ENCODE measurements at regions of chr4 and their contacts with region 1.

Region 1: GRCh38 chr4:183504064-183504929 is 561 bp upstream of the ING2 start:
- DNase-seq: peak; percentile 98 to 100 (median 99)
- H3K4me3 ChIP-seq: peak overlapping the region; percentile 50 to 73
- H3K4me3 Mint-ChIP-seq: peak overlapping the region; percentile 82 to 98 (median 94)
- H3K27ac ChIP-seq: peak overlapping the region; percentile 90
- H3K27ac Mint-ChIP-seq: peak overlapping the region; percentile 89 to 98 (median 95)
- H3K4me1 ChIP-seq: peaks cover 19% of the 10 kb centered on the region
- H3K4me1 Mint-ChIP-seq: peaks cover 9 to 27% (median 23%) of the 10 kb centered on the region in 4 donors
- H3K27me3 ChIP-seq: no peaks in the 10 kb centered on the region
- H3K27me3 Mint-ChIP-seq: no peaks in the 10 kb centered on the region

Region 2: DNA sequence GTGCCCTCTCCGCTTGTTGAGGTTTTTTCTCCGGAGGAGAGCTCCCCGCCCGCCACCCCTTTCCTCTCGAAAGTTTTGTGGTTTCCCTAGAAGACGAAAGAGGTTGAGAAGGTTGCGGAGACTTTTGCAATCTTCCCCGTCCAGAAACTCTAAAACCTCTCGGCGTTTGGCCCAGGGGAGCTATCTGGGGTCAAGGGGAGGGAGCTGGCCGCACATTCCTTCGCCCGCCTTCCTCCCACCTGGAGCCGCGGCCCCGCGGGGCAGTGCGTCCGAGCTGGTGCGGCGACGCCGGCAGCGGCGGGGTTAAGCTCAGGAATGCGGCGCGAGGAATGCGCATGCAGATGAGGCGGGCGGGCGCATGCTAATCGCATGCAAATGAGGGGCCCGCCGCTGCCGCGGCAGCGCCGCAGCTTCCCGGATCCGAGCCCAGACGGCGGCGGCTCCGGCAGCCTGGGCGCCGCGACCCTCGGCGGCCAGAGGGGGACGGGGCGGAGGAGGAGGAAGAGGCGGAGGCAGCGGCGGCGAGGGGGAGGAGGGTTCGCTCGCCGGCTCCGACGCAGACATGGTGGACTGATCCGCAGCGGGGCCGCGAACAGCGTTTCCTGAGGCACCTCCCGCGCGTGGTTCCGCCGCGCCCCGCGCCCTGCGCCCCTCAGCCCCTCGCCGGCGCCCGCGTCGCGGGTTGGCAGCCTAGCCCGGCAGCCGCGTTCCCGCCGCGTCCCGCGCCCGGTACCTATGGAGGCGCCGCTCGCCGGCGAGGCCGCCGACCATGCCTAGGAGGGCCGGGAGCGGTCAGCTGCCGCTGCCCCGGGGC is 405.4 kb before region 1 on chr4 and contains the start of gene WWC2:
- CTCF ChIA-PET with region 1: no interaction called
- POLR2A ChIA-PET with region 1: no interaction called
- intact Hi-C with region 1: loop called (anchors 2 kb)
- DNase-seq: peak; percentile 62 to 71 (median 62)
- H3K4me3 ChIP-seq: peak within 1 kb of the TSS; percentile 45 to 52
- H3K4me3 Mint-ChIP-seq: peak within 1 kb of the TSS; percentile 76 to 86 (median 78)
- H3K27ac ChIP-seq: no peak within 1 kb of the TSS
- H3K27ac Mint-ChIP-seq: peak within 1 kb of the TSS in 2 of 7 donors; percentile 19 to 50
- H3K4me1 ChIP-seq: peaks cover 14% of the 10 kb centered on the region
- H3K4me1 Mint-ChIP-seq: peaks cover 8 to 37% (median 21%) of the 10 kb centered on the region in 4 donors
- H3K27me3 ChIP-seq: peaks cover 3% of the 10 kb centered on the region
- H3K27me3 Mint-ChIP-seq: peaks cover 0 to 3% of the 10 kb centered on the region in 2 donors
- total RNA-seq, gene WWC2: 7.3 to 7.6 TPM

Region 3: GRCh38 chr4:183396227-183396637 is 108.1 kb before region 1 on chr4:
- CTCF ChIA-PET with region 1: no interaction called
- POLR2A ChIA-PET with region 1: no interaction called
- intact Hi-C with region 1: no loop called
- DNase-seq: no peak
- H3K4me3 ChIP-seq: no peak overlapping the region
- H3K4me3 Mint-ChIP-seq: no peak overlapping the region
- H3K27ac ChIP-seq: no peak overlapping the region
- H3K27ac Mint-ChIP-seq: no peak overlapping the region
- H3K4me1 ChIP-seq: peaks cover 5% of the 10 kb centered on the region
- H3K4me1 Mint-ChIP-seq: peaks cover 6 to 26% (median 16%) of the 10 kb centered on the region in 4 donors
- H3K27me3 ChIP-seq: no peaks in the 10 kb centered on the region
- H3K27me3 Mint-ChIP-seq: peaks cover 3 to 8% of the 10 kb centered on the region in 2 donors

Region 4: DNA sequence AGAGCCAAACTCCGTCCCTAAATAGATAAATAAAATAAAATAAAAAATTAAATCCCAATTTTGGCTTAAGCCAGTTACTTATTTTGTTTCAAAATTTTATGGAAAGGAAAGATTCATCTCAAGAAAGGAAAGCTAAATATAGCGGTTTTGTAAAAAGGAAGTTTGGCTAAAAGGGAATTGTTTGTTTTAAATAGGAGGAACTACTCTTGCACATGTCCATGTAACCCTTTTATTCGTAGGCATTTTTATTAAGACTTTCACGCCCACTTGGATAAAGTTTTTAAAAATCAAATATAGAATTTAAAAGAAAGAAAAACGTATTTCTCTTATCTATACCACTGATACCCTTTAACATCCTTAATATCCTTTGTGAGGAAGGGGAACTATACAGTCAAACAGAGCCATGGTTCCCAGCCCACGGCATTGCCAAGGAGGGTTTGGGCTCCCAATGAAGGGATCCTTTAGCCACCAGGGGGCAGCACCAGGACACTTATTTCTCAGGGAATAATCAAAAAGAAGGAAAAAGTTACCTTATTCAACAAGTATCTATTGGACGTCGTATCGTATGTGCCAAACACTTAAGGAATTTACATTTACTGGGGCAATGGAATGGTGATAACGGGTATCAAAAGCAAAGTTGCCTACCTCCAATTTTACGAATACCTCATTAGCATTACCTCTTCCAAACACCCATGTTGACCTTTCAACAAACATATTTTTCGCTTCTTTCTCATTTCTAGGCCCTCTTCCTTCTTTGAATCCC is 32.2 kb before region 1 on chr4:
- CTCF ChIA-PET with region 1: interaction called, 8 read pairs
- POLR2A ChIA-PET with region 1: interaction called, 3 read pairs
- intact Hi-C with region 1: loop called (anchors 1 kb)
- DNase-seq: peak; percentile 63 to 73 (median 68)
- H3K4me3 ChIP-seq: no peak overlapping the region
- H3K4me3 Mint-ChIP-seq: peak overlapping the region in 1 of 8 donors; percentile 32
- H3K27ac ChIP-seq: no peak overlapping the region
- H3K27ac Mint-ChIP-seq: peak overlapping the region in 1 of 7 donors; percentile 8
- H3K4me1 ChIP-seq: peaks cover 3% of the 10 kb centered on the region
- H3K4me1 Mint-ChIP-seq: peaks cover 0 to 6% (median 2%) of the 10 kb centered on the region in 4 donors
- H3K27me3 ChIP-seq: no peaks in the 10 kb centered on the region
- H3K27me3 Mint-ChIP-seq: no peaks in the 10 kb centered on the region

Region 5: DNA sequence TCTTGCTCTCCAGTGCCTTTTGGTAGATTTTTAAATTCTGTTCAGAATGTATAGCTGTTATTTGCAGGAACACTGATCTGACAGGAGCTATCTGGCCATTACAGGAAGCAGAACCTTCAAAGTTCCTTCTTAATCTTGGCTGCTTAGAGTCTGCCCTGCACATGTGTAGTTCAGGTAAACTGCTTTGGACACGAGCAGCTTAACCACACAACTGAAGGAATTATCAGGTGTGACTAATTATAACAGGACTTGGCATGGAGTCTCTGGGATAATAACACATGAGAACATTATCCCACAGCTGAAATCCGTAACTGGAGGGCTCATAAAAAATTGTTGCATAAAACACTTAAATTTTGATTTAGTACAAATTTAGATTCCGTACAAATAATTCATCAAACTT is 11.1 kb before region 1 on chr4:
- CTCF ChIA-PET with region 1: no interaction called
- POLR2A ChIA-PET with region 1: no interaction called
- intact Hi-C with region 1: no loop called
- DNase-seq: no peak
- H3K4me3 ChIP-seq: no peak overlapping the region
- H3K4me3 Mint-ChIP-seq: no peak overlapping the region
- H3K27ac ChIP-seq: no peak overlapping the region
- H3K27ac Mint-ChIP-seq: no peak overlapping the region
- H3K4me1 ChIP-seq: no peaks in the 10 kb centered on the region
- H3K4me1 Mint-ChIP-seq: no peaks in the 10 kb centered on the region
- H3K27me3 ChIP-seq: no peaks in the 10 kb centered on the region
- H3K27me3 Mint-ChIP-seq: no peaks in the 10 kb centered on the region

Region 6: GRCh38 chr4:183541752-183542040 is 37.4 kb after region 1 on chr4:
- CTCF ChIA-PET with region 1: no interaction called
- POLR2A ChIA-PET with region 1: no interaction called
- intact Hi-C with region 1: no loop called
- DNase-seq: no peak
- H3K4me3 ChIP-seq: no peak overlapping the region
- H3K4me3 Mint-ChIP-seq: no peak overlapping the region
- H3K27ac ChIP-seq: no peak overlapping the region
- H3K27ac Mint-ChIP-seq: no peak overlapping the region
- H3K4me1 ChIP-seq: no peaks in the 10 kb centered on the region
- H3K4me1 Mint-ChIP-seq: no peaks in the 10 kb centered on the region
- H3K27me3 ChIP-seq: no peaks in the 10 kb centered on the region
- H3K27me3 Mint-ChIP-seq: peaks cover 25 to 33% of the 10 kb centered on the region in 2 donors

Region 7: GRCh38 chr4:183758061-183758757 is 253.9 kb after region 1 on chr4:
- CTCF ChIA-PET with region 1: no interaction called
- POLR2A ChIA-PET with region 1: no interaction called
- intact Hi-C with region 1: no loop called
- DNase-seq: no peak
- H3K4me3 ChIP-seq: no peak overlapping the region
- H3K4me3 Mint-ChIP-seq: no peak overlapping the region
- H3K27ac ChIP-seq: no peak overlapping the region
- H3K27ac Mint-ChIP-seq: no peak overlapping the region
- H3K4me1 ChIP-seq: no peaks in the 10 kb centered on the region
- H3K4me1 Mint-ChIP-seq: no peaks in the 10 kb centered on the region
- H3K27me3 ChIP-seq: no peaks in the 10 kb centered on the region
- H3K27me3 Mint-ChIP-seq: peaks cover 9 to 12% of the 10 kb centered on the region in 2 donors

Region 8: GRCh38 chr4:184733654-184734524 is 1229.6 kb after region 1 on chr4 and contains the start of gene CENPU:
- CTCF ChIA-PET with region 1: no interaction called
- POLR2A ChIA-PET with region 1: interaction called, 5 read pairs
- intact Hi-C with region 1: loop called (anchors 10 kb)
- DNase-seq: peak; percentile 93 to 95 (median 94)
- H3K4me3 ChIP-seq: peak within 1 kb of the TSS; percentile 59 to 81
- H3K4me3 Mint-ChIP-seq: peak within 1 kb of the TSS; percentile 88 to 96 (median 92)
- H3K27ac ChIP-seq: peak within 1 kb of the TSS; percentile 56
- H3K27ac Mint-ChIP-seq: peak within 1 kb of the TSS; percentile 86 to 95 (median 92)
- H3K4me1 ChIP-seq: peaks cover 15% of the 10 kb centered on the region
- H3K4me1 Mint-ChIP-seq: peaks cover 8 to 23% (median 14%) of the 10 kb centered on the region in 4 donors
- H3K27me3 ChIP-seq: no peaks in the 10 kb centered on the region
- H3K27me3 Mint-ChIP-seq: no peaks in the 10 kb centered on the region
- total RNA-seq, gene CENPU: 2.1 to 2.2 TPM